ENCODE measurements at regions of chr2 and their contacts with region 1.

Region 1: DNA sequence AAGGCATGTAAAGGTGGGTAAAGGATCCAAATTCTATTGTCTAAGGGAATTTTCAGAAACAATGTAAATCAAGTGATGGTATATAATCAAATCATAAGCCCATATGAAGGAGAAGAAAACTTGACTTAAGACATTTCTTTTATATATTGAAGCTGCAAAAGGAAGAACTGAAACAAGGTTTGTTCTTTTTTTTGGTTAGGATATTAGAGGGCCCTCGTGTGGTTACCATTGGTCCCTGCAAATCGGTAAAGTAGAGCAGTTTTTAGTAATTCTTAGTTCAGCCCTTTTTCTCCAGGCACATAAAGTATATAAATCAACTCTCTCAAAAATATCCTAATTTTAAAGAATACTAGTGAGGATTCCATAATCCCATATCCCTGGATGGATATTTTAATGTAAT is 105.6 kb upstream of the STK17B start:
- DNase-seq: no peak
- H3K4me3 ChIP-seq: no peak overlapping the region
- H3K27ac ChIP-seq: peak overlapping the region; percentile 69
- H3K4me1 ChIP-seq: peaks cover 6% of the 10 kb centered on the region
- H3K27me3 ChIP-seq: no peaks in the 10 kb centered on the region
- CTCF ChIP-seq: peak; percentile 43

Region 2: DNA sequence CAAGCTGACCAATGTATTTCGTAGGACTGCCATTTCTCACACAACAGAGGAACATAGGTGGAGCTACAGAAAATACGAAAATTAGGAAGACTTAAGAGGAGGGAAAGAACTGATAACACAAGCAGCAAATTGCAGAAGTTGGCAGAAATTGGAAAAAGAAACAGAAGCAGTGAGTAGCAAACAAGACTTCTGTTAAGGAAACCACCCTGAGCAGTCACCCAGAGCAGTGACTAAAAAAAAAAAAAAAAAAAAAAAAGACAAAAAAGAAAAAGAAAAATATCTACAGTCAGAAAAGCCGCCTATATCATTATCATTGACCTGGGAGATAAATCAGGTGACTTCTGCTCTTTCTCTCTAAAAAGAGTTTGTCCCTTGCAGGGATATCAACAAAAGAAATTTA is 127.1 kb before region 1 on chr2:
- intact Hi-C with region 1: loop called (anchors 10 kb)
- DNase-seq: no peak
- H3K4me3 ChIP-seq: no peak overlapping the region
- H3K27ac ChIP-seq: no peak overlapping the region
- H3K4me1 ChIP-seq: no peaks in the 10 kb centered on the region
- H3K27me3 ChIP-seq: no peaks in the 10 kb centered on the region
- CTCF ChIP-seq: no peak

Region 3: GRCh38 chr2:196314780-196315179 is 37.8 kb after region 1 on chr2:
- intact Hi-C with region 1: no loop called
- DNase-seq: no peak
- H3K4me3 ChIP-seq: no peak overlapping the region
- H3K27ac ChIP-seq: no peak overlapping the region
- H3K4me1 ChIP-seq: no peaks in the 10 kb centered on the region
- H3K27me3 ChIP-seq: no peaks in the 10 kb centered on the region
- CTCF ChIP-seq: no peak

Measured in colonic mucosa (tissue), 4 donors.